IMR-90 (cell line): ENCODE measurements at regions of chr10 and their contacts with region 1.

Region 1: DNA sequence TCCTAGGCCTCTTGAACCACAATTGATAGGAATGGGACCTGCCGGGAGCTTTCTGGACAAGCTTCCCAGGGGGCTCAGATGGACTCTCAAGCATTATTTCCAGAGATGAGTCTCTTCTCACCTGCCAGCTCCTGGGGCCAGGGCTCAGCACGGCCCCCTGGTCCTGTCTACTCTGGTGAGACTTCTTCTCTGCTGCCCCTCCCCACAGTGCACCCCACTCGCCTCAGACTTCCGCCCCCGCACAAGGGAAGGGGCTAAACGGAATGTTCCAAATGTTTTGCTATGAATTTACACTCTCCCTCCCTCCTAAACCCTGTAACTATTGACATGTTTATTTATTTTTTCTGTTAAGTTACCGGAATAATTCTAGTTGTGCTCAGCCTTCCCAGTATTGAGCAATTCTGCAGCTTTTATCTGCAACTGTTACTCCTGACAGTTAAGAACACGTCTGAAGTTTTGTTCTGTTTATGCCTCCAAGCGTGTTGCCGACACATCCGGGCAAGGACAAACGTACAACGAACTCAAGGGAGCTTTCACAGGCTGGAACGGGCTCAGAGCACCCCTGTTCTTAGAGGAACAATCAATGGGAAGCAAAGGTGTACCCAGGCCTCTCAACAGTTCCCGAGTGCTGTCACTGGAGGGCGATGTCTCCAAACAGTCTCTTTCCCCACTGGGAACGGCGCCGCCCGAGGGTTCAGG is 55.2 kb downstream of the FHIP2A start:
- DNase-seq: peak; percentile 58
- ATAC-seq: peak; percentile 88
- H3K4me3 ChIP-seq: no peak overlapping the region
- H3K27ac ChIP-seq: no peak overlapping the region
- H3K4me1 ChIP-seq: 0 out of 2 replicates have a peak, but pooled peaks cover 2% of the 10 kb centered on the region
- H3K27me3 ChIP-seq: no peaks in the 10 kb centered on the region
- CTCF ChIP-seq: peak; percentile 87
- POLR2A ChIP-seq: no peak
- RAD21 ChIP-seq: peak; percentile 91

Region 2: GRCh38 chr10:114279898-114280644 is 596.7 kb before region 1 on chr10:
- CTCF ChIA-PET with region 1: no interaction called
- POLR2A ChIA-PET with region 1: no interaction called
- dilution Hi-C with region 1: no loop called
- in situ Hi-C with region 1: no loop called
- intact Hi-C with region 1: no loop called
- DNase-seq: no peak
- ATAC-seq: no peak
- H3K4me3 ChIP-seq: no peak overlapping the region
- H3K27ac ChIP-seq: no peak overlapping the region
- H3K4me1 ChIP-seq: no peaks in the 10 kb centered on the region
- H3K27me3 ChIP-seq: peaks cover 60% of the 10 kb centered on the region
- CTCF ChIP-seq: no peak
- POLR2A ChIP-seq: no peak
- RAD21 ChIP-seq: no peak

Region 3: DNA sequence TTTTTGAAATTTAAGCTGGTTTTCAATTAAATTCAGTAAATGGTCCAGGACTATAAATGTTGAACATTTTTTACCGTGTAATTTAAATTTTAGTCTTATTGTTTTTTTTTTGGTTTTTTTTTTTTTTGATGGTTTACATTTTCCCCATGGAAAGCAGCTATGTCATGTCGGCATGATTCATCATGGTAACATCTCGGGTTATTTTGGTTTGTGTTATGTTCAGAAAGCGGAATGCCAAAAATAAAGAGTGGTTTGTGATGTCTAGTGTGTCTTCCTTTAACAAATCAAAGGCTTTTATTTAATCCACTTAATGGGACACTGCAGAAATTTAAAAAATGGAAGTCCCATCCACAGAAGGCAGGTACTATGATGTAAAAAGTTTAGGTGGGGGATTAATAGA is 119.8 kb after region 1 on chr10:
- CTCF ChIA-PET with region 1: no interaction called
- POLR2A ChIA-PET with region 1: no interaction called
- dilution Hi-C with region 1: no loop called
- in situ Hi-C with region 1: no loop called
- intact Hi-C with region 1: loop called (anchors 10 kb)
- DNase-seq: peak; percentile 81
- ATAC-seq: peak; percentile 56
- H3K4me3 ChIP-seq: no peak overlapping the region
- H3K27ac ChIP-seq: no peak overlapping the region
- H3K4me1 ChIP-seq: peaks cover 7% of the 10 kb centered on the region
- H3K27me3 ChIP-seq: no peaks in the 10 kb centered on the region
- CTCF ChIP-seq: no peak
- POLR2A ChIP-seq: no peak
- RAD21 ChIP-seq: no peak

Region 4: GRCh38 chr10:115049957-115050356 is 173.2 kb after region 1 on chr10:
- CTCF ChIA-PET with region 1: interaction called, 3 read pairs
- POLR2A ChIA-PET with region 1: no interaction called
- dilution Hi-C with region 1: no loop called
- in situ Hi-C with region 1: no loop called
- intact Hi-C with region 1: loop called (anchors 5 kb)
- DNase-seq: peak; percentile 8
- ATAC-seq: peak; percentile 24; the same call in 1 of the 2 replicates
- H3K4me3 ChIP-seq: no peak overlapping the region
- H3K27ac ChIP-seq: no peak overlapping the region
- H3K4me1 ChIP-seq: 0 out of 2 replicates have a peak, but pooled peaks cover 3% of the 10 kb centered on the region
- H3K27me3 ChIP-seq: no peaks in the 10 kb centered on the region
- CTCF ChIP-seq: no peak
- POLR2A ChIP-seq: no peak
- RAD21 ChIP-seq: no peak

Region 5: DNA sequence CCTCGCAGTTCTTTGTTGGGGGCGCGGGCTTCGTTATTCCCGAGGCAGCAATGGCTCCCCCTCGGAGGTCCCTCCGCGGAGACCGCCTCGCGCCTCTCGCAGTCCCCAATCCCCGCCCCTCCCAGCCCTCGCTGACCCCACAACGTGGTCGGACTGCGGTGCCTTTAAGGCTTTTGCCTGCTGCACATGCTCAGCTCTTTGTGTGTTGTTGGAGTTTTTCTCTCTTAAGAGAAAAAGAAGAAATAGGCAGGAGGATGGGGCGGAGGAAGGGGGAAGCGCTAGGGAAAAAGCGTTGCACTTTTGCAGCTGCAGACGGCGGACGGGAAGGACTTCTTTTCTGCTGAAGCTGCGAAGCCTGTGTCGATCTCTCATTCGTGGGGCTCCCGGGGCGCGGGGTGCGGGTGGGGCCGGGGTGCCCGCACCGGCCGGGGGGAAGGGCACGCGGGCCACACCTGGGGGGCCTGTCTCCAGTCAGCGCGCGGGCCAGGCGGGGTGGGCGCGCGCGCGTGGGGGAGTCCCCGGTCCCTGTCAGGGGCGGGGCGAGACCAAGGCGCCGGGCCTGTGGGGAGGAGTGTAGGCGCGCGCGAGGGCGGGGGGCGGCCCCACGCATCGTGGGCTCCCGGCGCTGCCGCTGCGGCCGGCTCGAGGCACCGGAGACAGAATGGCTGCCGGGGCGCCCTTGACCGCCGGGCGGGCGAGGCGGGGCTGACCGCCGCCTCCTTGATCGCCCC is 216.0 kb after region 1 on chr10:
- CTCF ChIA-PET with region 1: no interaction called
- POLR2A ChIA-PET with region 1: interaction called, 3 read pairs
- dilution Hi-C with region 1: no loop called
- in situ Hi-C with region 1: no loop called
- intact Hi-C with region 1: loop called (anchors 2 kb)
- DNase-seq: peak; percentile 27
- ATAC-seq: peak; percentile 77
- H3K4me3 ChIP-seq: peak overlapping the region; percentile 64
- H3K27ac ChIP-seq: no peak overlapping the region
- H3K4me1 ChIP-seq: no peaks in the 10 kb centered on the region
- H3K27me3 ChIP-seq: peaks cover 39% of the 10 kb centered on the region
- CTCF ChIP-seq: no peak
- POLR2A ChIP-seq: no peak
- RAD21 ChIP-seq: no peak

Region 6: GRCh38 chr10:115129752-115130151 is 253.0 kb after region 1 on chr10:
- CTCF ChIA-PET with region 1: interaction called, 8 read pairs
- POLR2A ChIA-PET with region 1: no interaction called
- dilution Hi-C with region 1: no loop called
- in situ Hi-C with region 1: loop called (anchors 10 kb)
- intact Hi-C with region 1: loop called (anchors 1 kb)
- DNase-seq: peak; percentile 37
- ATAC-seq: peak; percentile 46
- H3K4me3 ChIP-seq: no peak overlapping the region
- H3K27ac ChIP-seq: no peak overlapping the region
- H3K4me1 ChIP-seq: no peaks in the 10 kb centered on the region
- H3K27me3 ChIP-seq: no peaks in the 10 kb centered on the region
- CTCF ChIP-seq: peak; percentile 56
- POLR2A ChIP-seq: no peak
- RAD21 ChIP-seq: peak; percentile 67

Region 7: DNA sequence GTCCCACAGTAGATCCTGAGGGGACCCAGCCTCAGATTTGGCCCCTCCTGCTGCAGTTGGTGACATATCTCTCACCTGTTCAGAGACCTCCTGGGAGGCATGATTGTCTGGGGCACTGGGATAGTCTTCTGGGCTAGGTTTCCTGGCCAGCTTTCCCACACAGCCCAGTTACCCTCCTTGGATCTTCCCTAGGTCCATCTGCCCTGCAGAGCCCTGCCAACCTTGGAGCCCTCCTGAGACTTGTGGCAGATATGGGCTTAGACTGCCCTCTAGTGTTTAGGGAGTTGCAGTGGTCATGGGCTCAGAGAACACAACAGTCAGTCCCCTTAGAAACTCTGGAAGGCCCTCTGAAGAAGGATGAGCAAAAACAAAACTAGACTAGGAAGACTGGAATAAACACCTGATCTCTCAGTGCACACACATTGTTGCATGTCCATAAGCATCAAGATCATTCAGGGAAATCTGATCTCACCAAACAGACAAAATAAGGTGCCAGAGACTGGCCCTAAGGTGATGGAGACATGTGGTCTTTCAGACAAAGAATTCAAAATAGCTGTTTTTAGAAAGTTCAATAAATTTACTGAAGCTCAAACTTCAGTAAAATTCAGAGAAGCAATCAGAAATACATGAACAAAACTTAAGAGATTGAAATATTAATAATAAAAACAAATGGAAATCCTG is 541.0 kb after region 1 on chr10:
- CTCF ChIA-PET with region 1: no interaction called
- POLR2A ChIA-PET with region 1: no interaction called
- dilution Hi-C with region 1: no loop called
- in situ Hi-C with region 1: loop called (anchors 25 kb)
- intact Hi-C with region 1: loop called (anchors 2 kb)
- DNase-seq: peak; percentile 37
- ATAC-seq: peak; percentile 84
- H3K4me3 ChIP-seq: no peak overlapping the region
- H3K27ac ChIP-seq: no peak overlapping the region
- H3K4me1 ChIP-seq: no peaks in the 10 kb centered on the region
- H3K27me3 ChIP-seq: no peaks in the 10 kb centered on the region
- CTCF ChIP-seq: peak; percentile 55
- POLR2A ChIP-seq: no peak
- RAD21 ChIP-seq: peak; percentile 66

Region 8: DNA sequence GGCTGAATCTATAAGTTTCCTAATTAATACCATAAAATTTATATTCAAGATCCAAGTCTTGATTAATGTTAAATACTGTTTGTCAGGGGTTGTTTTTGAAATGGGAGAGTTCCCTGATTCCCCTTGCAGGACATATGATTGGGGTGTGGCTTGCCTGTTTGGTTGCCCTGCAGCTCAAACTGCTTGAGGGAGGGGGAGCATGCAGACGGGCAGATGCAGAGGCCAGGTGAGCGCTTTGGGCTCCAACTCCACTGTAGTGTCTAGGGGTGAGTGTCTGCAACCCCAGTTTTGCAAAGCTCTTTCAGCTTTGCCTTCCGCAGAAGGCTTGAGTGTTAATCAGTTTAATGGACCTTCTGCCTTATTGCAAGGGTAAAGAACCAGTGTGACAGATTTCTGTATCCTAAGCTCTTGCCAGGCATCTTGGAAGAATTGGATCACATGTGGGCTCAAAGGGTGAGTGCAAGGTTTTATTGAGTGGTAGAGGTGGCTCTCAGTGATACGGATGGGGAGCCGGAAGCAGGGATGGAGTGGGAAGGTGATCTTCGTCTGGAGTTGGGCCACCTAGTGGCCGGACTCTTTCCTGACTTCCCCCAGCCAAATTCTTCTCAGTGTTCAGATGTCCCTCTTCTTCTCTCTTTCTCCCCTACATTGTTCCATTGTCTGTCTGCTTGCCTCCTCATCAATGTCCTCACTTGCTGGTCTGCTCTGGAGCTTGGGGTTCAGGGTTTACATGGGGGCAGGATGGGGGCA is 696.1 kb after region 1 on chr10:
- CTCF ChIA-PET with region 1: no interaction called
- POLR2A ChIA-PET with region 1: no interaction called
- dilution Hi-C with region 1: no loop called
- in situ Hi-C with region 1: no loop called
- intact Hi-C with region 1: no loop called
- DNase-seq: no peak
- ATAC-seq: peak; percentile 42; the same call in 1 of the 2 replicates
- H3K4me3 ChIP-seq: no peak overlapping the region
- H3K27ac ChIP-seq: no peak overlapping the region
- H3K4me1 ChIP-seq: no peaks in the 10 kb centered on the region
- H3K27me3 ChIP-seq: no peaks in the 10 kb centered on the region
- CTCF ChIP-seq: no peak
- POLR2A ChIP-seq: no peak
- RAD21 ChIP-seq: no peak